ENCODE measurements at regions of chr5 and their contacts with region 1.

Region 1: GRCh38 chr5:142881076-142881783 is 111.1 kb downstream of the ARHGAP26 start:
- DNase-seq: no peak
- H3K4me3 ChIP-seq: no peak overlapping the region
- H3K27ac ChIP-seq: no peak overlapping the region
- H3K4me1 ChIP-seq: peaks cover 0 to 27% (median 10%) of the 10 kb centered on the region in 4 donors
- H3K27me3 ChIP-seq: no peaks in the 10 kb centered on the region
- CTCF ChIP-seq: no peak
- EP300 ChIP-seq: no peak
- POLR2A ChIP-seq: no peak

Region 2: GRCh38 chr5:142713121-142713706 is 168.0 kb before region 1 on chr5:
- intact Hi-C with region 1: loop called (anchors 1 kb)
- DNase-seq: peak; percentile 92
- H3K4me3 ChIP-seq: peak overlapping the region; percentile 29 to 56 (median 51)
- H3K27ac ChIP-seq: peak overlapping the region; percentile 67 to 83 (median 78)
- H3K4me1 ChIP-seq: peaks cover 0 to 12% (median 7%) of the 10 kb centered on the region in 4 donors
- H3K27me3 ChIP-seq: no peaks in the 10 kb centered on the region
- CTCF ChIP-seq: peak; percentile 82 to 99 (median 94)
- EP300 ChIP-seq: no peak
- POLR2A ChIP-seq: no peak

Region 3: GRCh38 chr5:142748568-142749249 is 132.5 kb before region 1 on chr5:
- intact Hi-C with region 1: loop called (anchors 2 kb)
- DNase-seq: no peak
- H3K4me3 ChIP-seq: no peak overlapping the region
- H3K27ac ChIP-seq: no peak overlapping the region
- H3K4me1 ChIP-seq: peaks cover 0 to 28% (median 23%) of the 10 kb centered on the region in 4 donors
- H3K27me3 ChIP-seq: no peaks in the 10 kb centered on the region
- CTCF ChIP-seq: peak in 3 of 4 experiments; percentile 30 to 36 (median 35)
- EP300 ChIP-seq: no peak
- POLR2A ChIP-seq: no peak

Region 4: DNA sequence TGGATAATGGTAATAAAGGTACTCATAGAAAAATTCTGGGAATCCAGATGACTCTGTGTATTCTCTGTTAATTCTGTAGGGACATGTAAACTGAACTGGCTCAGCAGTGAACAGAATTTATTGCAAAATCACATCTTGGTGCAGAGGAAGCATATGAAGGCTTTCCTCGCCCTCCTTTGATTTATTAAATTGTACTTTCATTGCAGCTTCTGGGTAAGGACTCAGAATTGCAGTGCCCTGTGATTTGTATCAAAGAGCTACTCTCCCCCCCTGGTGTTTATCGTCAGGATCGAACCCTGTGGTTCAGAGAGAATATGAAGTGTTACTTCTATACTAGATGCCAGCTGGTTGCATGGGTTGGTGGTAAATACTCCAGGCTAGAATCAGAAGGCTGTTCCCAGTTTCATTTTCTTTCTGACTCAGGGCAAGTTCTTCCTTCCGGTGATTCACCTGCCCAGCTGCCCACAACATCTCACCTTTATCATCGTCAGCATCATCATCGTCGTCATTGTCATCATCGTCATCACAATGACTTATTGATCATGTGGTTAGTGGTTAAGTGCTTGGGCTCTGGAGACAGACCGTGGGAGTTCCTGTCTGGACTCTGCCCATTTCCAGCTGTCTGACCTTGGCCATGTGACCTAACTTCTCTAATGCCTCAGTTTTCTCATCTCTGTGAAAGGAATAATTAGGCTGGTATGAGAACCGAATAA is 127.7 kb after region 1 on chr5:
- intact Hi-C with region 1: no loop called
- DNase-seq: no peak
- H3K4me3 ChIP-seq: no peak overlapping the region
- H3K27ac ChIP-seq: peak overlapping the region in 1 of 4 donors; percentile 4
- H3K4me1 ChIP-seq: peaks cover 0 to 14% (median 9%) of the 10 kb centered on the region in 4 donors
- H3K27me3 ChIP-seq: no peaks in the 10 kb centered on the region
- CTCF ChIP-seq: no peak
- EP300 ChIP-seq: peak in 2 of 4 donors; percentile 1 to 24
- POLR2A ChIP-seq: no peak

Region 5: DNA sequence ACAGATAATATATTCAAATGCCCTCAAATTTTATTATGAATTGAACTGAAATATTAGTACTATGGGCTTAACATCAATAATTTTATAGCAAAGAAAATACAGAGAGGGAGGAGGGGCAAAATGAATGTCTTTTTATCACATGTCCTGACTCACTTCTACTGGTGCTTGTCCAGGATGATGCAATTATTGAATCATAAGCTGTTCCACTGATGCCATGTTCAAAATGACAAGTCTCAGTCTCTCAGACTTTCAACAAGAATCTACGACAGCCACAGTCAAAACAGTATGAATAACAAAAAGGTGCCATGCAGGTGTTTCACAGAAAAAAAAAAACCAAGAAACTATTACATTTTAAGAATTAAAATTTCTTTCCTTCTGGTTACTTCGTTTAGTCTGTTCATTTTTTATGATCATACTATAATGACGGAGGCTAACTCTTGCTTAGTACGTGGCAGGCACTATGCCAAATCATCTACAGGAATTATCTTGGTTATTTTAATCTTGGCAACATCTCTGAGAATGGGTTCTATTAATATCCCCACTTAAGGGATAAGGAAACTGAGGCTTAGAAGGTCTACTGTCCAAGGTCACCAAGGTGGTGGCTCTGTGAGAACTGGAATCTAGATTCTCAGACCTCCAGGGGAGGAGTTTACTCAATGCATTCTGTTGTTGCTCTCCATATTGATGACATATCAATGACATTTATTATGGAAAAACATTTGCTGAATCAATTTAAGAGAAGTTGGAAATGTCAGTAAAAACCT is 460.8 kb after region 1 on chr5:
- intact Hi-C with region 1: no loop called
- DNase-seq: no peak
- H3K4me3 ChIP-seq: no peak overlapping the region
- H3K27ac ChIP-seq: peak overlapping the region in 3 of 4 donors; percentile 62 to 74 (median 67)
- H3K4me1 ChIP-seq: peaks cover 0 to 39% (median 26%) of the 10 kb centered on the region in 4 donors
- H3K27me3 ChIP-seq: no peaks in the 10 kb centered on the region
- CTCF ChIP-seq: no peak
- EP300 ChIP-seq: no peak
- POLR2A ChIP-seq: no peak

Measured in sigmoid colon (tissue), 7 donors.